ENCODE measurements at regions of chr10 and their contacts with region 1.

Region 1: GRCh38 chr10:11270135-11270857 is 252.6 kb downstream of the CELF2 start:
- DNase-seq: peak; percentile 85
- H3K4me3 Mint-ChIP-seq: peak overlapping the region; percentile 25
- H3K27ac Mint-ChIP-seq: peak overlapping the region; percentile 52
- H3K4me1 Mint-ChIP-seq: peaks cover 90% of the 10 kb centered on the region
- H3K27me3 Mint-ChIP-seq: no peaks in the 10 kb centered on the region

Region 2: GRCh38 chr10:11017570-11018431 is 252.5 kb before region 1 on chr10 and contains the start of gene CELF2:
- CTCF ChIA-PET with region 1: no interaction called
- POLR2A ChIA-PET with region 1: no interaction called
- intact Hi-C with region 1: no loop called
- DNase-seq: peak; percentile 54
- H3K4me3 Mint-ChIP-seq: peak within 1 kb of the TSS; percentile 73
- H3K27ac Mint-ChIP-seq: no peak within 1 kb of the TSS
- H3K4me1 Mint-ChIP-seq: peaks cover 16% of the 10 kb centered on the region
- H3K27me3 Mint-ChIP-seq: peaks cover 73% of the 10 kb centered on the region
- total RNA-seq, gene CELF2: 109 to 113 TPM

Region 3: DNA sequence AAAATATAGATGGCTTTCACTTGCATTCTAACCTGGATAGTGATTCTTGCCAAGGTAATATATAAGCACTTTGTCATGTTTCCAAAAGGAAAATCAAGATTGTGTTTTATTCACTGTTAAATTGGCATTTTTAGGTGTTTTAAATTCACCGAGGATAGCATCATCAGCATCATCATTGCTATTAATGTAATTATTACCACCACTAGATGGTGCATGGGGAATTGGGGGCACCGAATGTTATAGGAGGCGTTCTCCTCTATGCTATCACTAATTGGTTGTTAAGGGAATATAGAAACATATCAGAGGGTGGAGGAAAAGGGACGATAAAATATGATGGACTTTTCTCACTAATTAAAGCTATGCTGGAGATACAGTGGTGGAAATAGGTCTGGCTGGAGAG is 157.1 kb before region 1 on chr10:
- CTCF ChIA-PET with region 1: interaction called, 36 read pairs
- POLR2A ChIA-PET with region 1: no interaction called
- intact Hi-C with region 1: loop called (anchors 1 kb)
- DNase-seq: peak; percentile 19
- H3K4me3 Mint-ChIP-seq: no peak overlapping the region
- H3K27ac Mint-ChIP-seq: peak overlapping the region; percentile 10
- H3K4me1 Mint-ChIP-seq: peaks cover 20% of the 10 kb centered on the region
- H3K27me3 Mint-ChIP-seq: no peaks in the 10 kb centered on the region

Region 4: GRCh38 chr10:11286261-11286852 is 16.1 kb after region 1 on chr10:
- CTCF ChIA-PET with region 1: interaction called, 3 read pairs
- POLR2A ChIA-PET with region 1: interaction called, 3 read pairs
- intact Hi-C with region 1: loop called (anchors 1 kb)
- DNase-seq: peak; percentile 59
- H3K4me3 Mint-ChIP-seq: peak overlapping the region; percentile 30
- H3K27ac Mint-ChIP-seq: no peak overlapping the region
- H3K4me1 Mint-ChIP-seq: peaks cover 25% of the 10 kb centered on the region
- H3K27me3 Mint-ChIP-seq: no peaks in the 10 kb centered on the region

Region 5: DNA sequence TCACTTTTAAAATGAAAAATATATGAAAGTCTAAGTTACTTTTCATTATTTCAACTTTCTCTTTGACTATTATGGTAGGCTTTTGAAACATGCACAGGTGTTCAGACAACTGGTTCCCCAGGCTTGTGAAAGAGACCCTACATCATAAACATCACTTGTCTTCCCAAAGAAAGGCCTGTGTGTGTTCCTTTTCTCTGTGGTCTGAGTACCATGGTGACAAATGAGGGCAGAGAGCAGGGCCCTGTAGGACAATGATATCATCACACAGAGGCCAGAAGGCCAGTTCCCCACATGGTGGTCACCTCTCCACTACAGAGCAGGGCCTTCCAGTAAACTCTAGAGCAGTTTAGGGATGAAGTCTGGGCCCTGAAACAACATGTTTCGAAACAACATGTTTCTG is 52.4 kb after region 1 on chr10:
- CTCF ChIA-PET with region 1: interaction called, 3 read pairs
- POLR2A ChIA-PET with region 1: interaction called, 6 read pairs
- intact Hi-C with region 1: loop called (anchors 1 kb)
- DNase-seq: no peak
- H3K4me3 Mint-ChIP-seq: no peak overlapping the region
- H3K27ac Mint-ChIP-seq: peak overlapping the region; percentile 83
- H3K4me1 Mint-ChIP-seq: peaks cover 69% of the 10 kb centered on the region
- H3K27me3 Mint-ChIP-seq: no peaks in the 10 kb centered on the region

Region 6: DNA sequence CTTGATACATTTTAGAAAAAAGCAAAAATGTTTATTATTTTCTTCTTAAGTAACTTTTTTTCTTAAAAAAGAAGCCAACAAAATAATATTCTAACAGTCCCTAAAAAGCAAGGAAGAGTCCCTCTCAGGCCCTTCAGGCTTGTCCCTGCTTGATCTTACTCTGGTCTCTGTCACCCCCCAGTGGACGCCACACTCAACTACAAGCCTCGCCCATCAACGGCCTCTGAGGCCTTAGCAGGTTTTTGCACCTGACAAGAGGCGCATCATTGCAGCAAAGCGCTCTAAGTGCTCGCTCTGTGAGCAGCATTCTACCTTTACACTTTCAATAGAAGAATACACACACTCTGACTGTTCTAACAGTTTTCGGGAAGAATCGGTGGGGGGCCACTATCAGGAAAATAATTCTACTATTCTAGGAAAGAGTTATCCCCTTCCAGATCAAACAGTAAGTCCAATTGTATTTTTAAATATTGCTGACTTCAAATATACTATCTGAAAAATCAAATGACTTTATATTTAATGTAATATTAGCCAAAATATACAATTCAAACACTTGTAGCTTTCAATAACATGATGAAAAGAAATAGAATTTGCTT is 202.0 kb after region 1 on chr10:
- CTCF ChIA-PET with region 1: no interaction called
- POLR2A ChIA-PET with region 1: no interaction called
- intact Hi-C with region 1: loop called (anchors 5 kb)
- DNase-seq: peak; percentile 84
- H3K4me3 Mint-ChIP-seq: no peak overlapping the region
- H3K27ac Mint-ChIP-seq: peak overlapping the region; percentile 28
- H3K4me1 Mint-ChIP-seq: no peaks in the 10 kb centered on the region
- H3K27me3 Mint-ChIP-seq: no peaks in the 10 kb centered on the region

Measured in activated CD4-positive, alpha-beta memory T cell treated with anti-CD3 and anti-CD28 coated beads for 36 hours (primary cell).